ENCODE measurements at regions of chr12 and their contacts with region 1.

Region 1: GRCh38 chr12:62603061-62603810 is 136.6 kb downstream of the MON2 start:
- DNase-seq: peak; percentile 68 to 89 (median 84)
- ATAC-seq: peak; percentile 75
- H3K4me3 ChIP-seq: peak overlapping the region; percentile 93
- H3K4me3 Mint-ChIP-seq: peak overlapping the region; percentile 77 to 97 (median 92)
- H3K27ac ChIP-seq: peak overlapping the region; percentile 99
- H3K27ac Mint-ChIP-seq: peak overlapping the region; percentile 99 to 100 (median 99)
- H3K4me1 ChIP-seq: peaks cover 12% of the 10 kb centered on the region in 2 donors
- H3K4me1 Mint-ChIP-seq: peaks cover 10 to 43% (median 29%) of the 10 kb centered on the region in 7 donors
- H3K27me3 ChIP-seq: no peaks in the 10 kb centered on the region
- H3K27me3 Mint-ChIP-seq: no peaks in the 10 kb centered on the region

Region 2: DNA sequence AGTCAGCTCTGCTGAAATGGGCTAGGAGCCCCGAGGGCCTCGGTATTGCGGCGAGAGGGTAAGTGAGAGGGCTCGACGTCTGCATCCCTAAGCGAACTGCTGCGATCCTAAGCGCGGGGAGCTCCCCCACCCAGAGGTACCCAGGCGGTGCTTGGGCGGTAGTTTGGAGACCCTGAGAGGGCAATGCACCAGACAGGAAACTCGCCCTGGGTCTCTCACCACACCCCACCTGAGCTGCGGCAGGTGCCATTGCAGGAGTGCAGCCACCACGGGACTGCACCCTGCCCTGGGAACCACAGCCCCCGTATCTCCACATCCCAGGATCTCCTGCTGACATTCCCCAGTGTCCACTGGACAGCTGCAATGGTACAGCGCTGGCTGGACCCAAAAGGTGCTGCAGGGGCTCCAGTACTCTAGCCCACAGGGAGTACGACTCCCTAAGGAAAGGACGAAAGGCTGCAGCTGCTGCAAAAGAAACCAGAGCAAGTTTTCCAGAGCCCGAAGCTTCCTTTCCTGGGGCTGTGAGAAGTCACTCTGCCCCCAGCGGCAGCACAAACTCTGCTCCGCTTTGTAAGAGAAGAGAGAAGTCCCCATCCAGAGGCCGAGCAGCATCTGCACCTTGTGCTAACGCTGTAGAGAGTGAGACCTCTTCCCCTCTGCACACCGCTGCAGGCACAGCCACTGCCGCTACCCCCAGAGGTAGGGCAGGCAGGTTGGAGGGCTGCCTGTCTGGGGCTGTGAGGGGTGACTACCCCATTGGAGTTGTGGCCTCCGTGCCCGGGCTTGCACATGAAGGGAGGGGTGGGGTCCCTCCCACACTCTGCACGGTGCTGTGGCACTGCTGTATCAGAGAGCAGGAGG is 167.7 kb before region 1 on chr12:
- CTCF ChIA-PET with region 1: no interaction called
- POLR2A ChIA-PET with region 1: no interaction called
- intact Hi-C with region 1: loop called (anchors 1 to 2 kb)
- DNase-seq: peak; percentile 8 to 38 (median 26)
- ATAC-seq: peak; percentile 77
- H3K4me3 ChIP-seq: peak overlapping the region; percentile 71
- H3K4me3 Mint-ChIP-seq: peak overlapping the region; percentile 79 to 93 (median 89)
- H3K27ac ChIP-seq: no peak overlapping the region
- H3K27ac Mint-ChIP-seq: peak overlapping the region in 3 of 9 donors; percentile 33 to 71 (median 36)
- H3K4me1 ChIP-seq: peaks cover 9 to 10% of the 10 kb centered on the region in 2 donors
- H3K4me1 Mint-ChIP-seq: peaks cover 9 to 24% (median 18%) of the 10 kb centered on the region in 7 donors
- H3K27me3 ChIP-seq: no peaks in the 10 kb centered on the region
- H3K27me3 Mint-ChIP-seq: peaks cover 19 to 67% (median 29%) of the 10 kb centered on the region in 5 donors

Region 3: DNA sequence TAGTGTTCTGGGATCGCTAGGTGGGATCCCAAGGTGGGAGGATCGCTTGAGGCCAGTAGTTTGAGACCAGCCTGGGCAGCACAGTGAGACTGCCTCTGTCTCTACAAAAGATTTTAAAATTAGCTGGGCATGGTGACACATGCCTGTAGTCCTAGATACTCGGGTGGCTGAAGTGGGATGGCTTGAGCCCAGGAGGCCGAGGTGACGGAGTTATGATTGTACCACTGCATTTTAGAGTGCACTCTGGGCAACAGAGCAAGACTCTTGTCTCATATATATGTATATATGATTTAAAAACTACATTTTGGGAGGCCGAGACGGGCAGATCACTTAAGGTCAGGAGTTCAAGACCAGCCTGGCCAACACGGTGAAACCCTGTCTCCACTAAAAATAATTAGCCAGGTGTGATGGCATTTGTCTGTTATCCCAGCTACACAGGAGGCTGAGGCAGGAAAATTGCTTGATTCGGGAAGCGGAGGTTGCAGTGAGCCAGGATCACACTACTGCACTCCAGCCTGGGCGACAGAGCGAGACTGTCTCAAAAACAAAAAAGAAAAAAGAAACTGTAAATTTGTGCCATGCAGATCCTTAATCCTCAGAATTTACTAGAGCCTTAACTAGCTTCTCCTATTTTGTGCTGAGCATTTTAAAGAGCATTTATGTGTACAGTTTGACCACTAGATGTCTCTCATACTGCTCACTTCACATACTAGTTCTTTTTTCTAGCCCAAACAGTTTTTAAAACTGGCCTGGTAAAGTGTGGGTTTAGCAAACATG is 21.8 kb before region 1 on chr12:
- CTCF ChIA-PET with region 1: interaction called, 5 read pairs
- POLR2A ChIA-PET with region 1: interaction called, 6 read pairs
- intact Hi-C with region 1: loop called (anchors 1 kb)
- DNase-seq: peak in 6 of 9 donors; percentile 18 to 53 (median 34)
- ATAC-seq: peak; percentile 81
- H3K4me3 ChIP-seq: no peak overlapping the region
- H3K4me3 Mint-ChIP-seq: no peak overlapping the region
- H3K27ac ChIP-seq: no peak overlapping the region
- H3K27ac Mint-ChIP-seq: peak overlapping the region in 1 of 9 donors; percentile 21
- H3K4me1 ChIP-seq: no peaks in the 10 kb centered on the region
- H3K4me1 Mint-ChIP-seq: peaks cover 0 to 2% (median 0%) of the 10 kb centered on the region in 7 donors
- H3K27me3 ChIP-seq: no peaks in the 10 kb centered on the region
- H3K27me3 Mint-ChIP-seq: no peaks in the 10 kb centered on the region

Region 4: GRCh38 chr12:62640910-62641448 is 37.7 kb after region 1 on chr12:
- CTCF ChIA-PET with region 1: no interaction called
- POLR2A ChIA-PET with region 1: no interaction called
- intact Hi-C with region 1: loop called in 1 of 2 experiments (anchors 2 kb)
- DNase-seq: peak in 2 of 9 donors; percentile 1 to 43
- ATAC-seq: peak; percentile 74
- H3K4me3 ChIP-seq: peak overlapping the region; percentile 22
- H3K4me3 Mint-ChIP-seq: peak overlapping the region in 1 of 10 donors; percentile 52
- H3K27ac ChIP-seq: no peak overlapping the region
- H3K27ac Mint-ChIP-seq: peak overlapping the region in 1 of 9 donors; percentile 58
- H3K4me1 ChIP-seq: peaks cover 0 to 12% of the 10 kb centered on the region in 2 donors
- H3K4me1 Mint-ChIP-seq: peaks cover 0 to 14% (median 6%) of the 10 kb centered on the region in 7 donors
- H3K27me3 ChIP-seq: no peaks in the 10 kb centered on the region
- H3K27me3 Mint-ChIP-seq: peaks cover 4 to 12% (median 10%) of the 10 kb centered on the region in 5 donors

Region 5: GRCh38 chr12:62651138-62651537 is 47.9 kb after region 1 on chr12:
- CTCF ChIA-PET with region 1: no interaction called
- POLR2A ChIA-PET with region 1: no interaction called
- intact Hi-C with region 1: no loop called
- DNase-seq: no peak
- ATAC-seq: no peak
- H3K4me3 ChIP-seq: no peak overlapping the region
- H3K4me3 Mint-ChIP-seq: no peak overlapping the region
- H3K27ac ChIP-seq: no peak overlapping the region
- H3K27ac Mint-ChIP-seq: no peak overlapping the region
- H3K4me1 ChIP-seq: peaks cover 0 to 4% of the 10 kb centered on the region in 2 donors
- H3K4me1 Mint-ChIP-seq: peaks cover 0 to 8% (median 4%) of the 10 kb centered on the region in 7 donors
- H3K27me3 ChIP-seq: no peaks in the 10 kb centered on the region
- H3K27me3 Mint-ChIP-seq: peaks cover 0 to 21% (median 15%) of the 10 kb centered on the region in 5 donors

Region 6: GRCh38 chr12:62793256-62794217 is 190.3 kb after region 1 on chr12:
- CTCF ChIA-PET with region 1: interaction called, 5 read pairs
- POLR2A ChIA-PET with region 1: interaction called, 3 read pairs
- intact Hi-C with region 1: loop called (anchors 1 kb)
- DNase-seq: peak; percentile 32 to 77 (median 62)
- ATAC-seq: peak; percentile 86
- H3K4me3 ChIP-seq: no peak overlapping the region
- H3K4me3 Mint-ChIP-seq: no peak overlapping the region
- H3K27ac ChIP-seq: no peak overlapping the region
- H3K27ac Mint-ChIP-seq: no peak overlapping the region
- H3K4me1 ChIP-seq: no peaks in the 10 kb centered on the region
- H3K4me1 Mint-ChIP-seq: peaks cover 0 to 4% (median 0%) of the 10 kb centered on the region in 7 donors
- H3K27me3 ChIP-seq: no peaks in the 10 kb centered on the region
- H3K27me3 Mint-ChIP-seq: peaks cover 0 to 21% (median 0%) of the 10 kb centered on the region in 5 donors

Region 7: GRCh38 chr12:63779498-63780481 is 1176.6 kb after region 1 on chr12 and contains the start of gene RXYLT1:
- CTCF ChIA-PET with region 1: no interaction called
- POLR2A ChIA-PET with region 1: no interaction called
- intact Hi-C with region 1: loop called in 1 of 2 experiments (anchors 2 kb)
- DNase-seq: peak; percentile 68 to 85 (median 77)
- ATAC-seq: peak; percentile 98
- H3K4me3 ChIP-seq: peak within 1 kb of the TSS; percentile 72
- H3K4me3 Mint-ChIP-seq: peak within 1 kb of the TSS; percentile 91 to 99 (median 96)
- H3K27ac ChIP-seq: peak within 1 kb of the TSS; percentile 88
- H3K27ac Mint-ChIP-seq: peak within 1 kb of the TSS; percentile 89 to 98 (median 94)
- H3K4me1 ChIP-seq: peaks cover 3 to 13% of the 10 kb centered on the region in 2 donors
- H3K4me1 Mint-ChIP-seq: peaks cover 6 to 48% (median 25%) of the 10 kb centered on the region in 7 donors
- H3K27me3 ChIP-seq: no peaks in the 10 kb centered on the region
- H3K27me3 Mint-ChIP-seq: peaks cover 0 to 3% (median 0%) of the 10 kb centered on the region in 5 donors
- total RNA-seq, gene RXYLT1: 9.9 to 22.0 (median 15.4) TPM

Region 8: GRCh38 chr12:64403707-64404469 is 1800.7 kb after region 1 on chr12 and contains the start of gene XPOT:
- CTCF ChIA-PET with region 1: no interaction called
- POLR2A ChIA-PET with region 1: no interaction called
- intact Hi-C with region 1: loop called in 1 of 2 experiments (anchors 10 kb)
- DNase-seq: peak; percentile 85 to 94 (median 92)
- ATAC-seq: peak; percentile 97
- H3K4me3 ChIP-seq: peak within 1 kb of the TSS; percentile 81
- H3K4me3 Mint-ChIP-seq: peak within 1 kb of the TSS; percentile 90 to 99 (median 96)
- H3K27ac ChIP-seq: peak within 1 kb of the TSS; percentile 82
- H3K27ac Mint-ChIP-seq: peak within 1 kb of the TSS; percentile 84 to 98 (median 95)
- H3K4me1 ChIP-seq: peaks cover 0 to 8% of the 10 kb centered on the region in 2 donors
- H3K4me1 Mint-ChIP-seq: peaks cover 8 to 41% (median 25%) of the 10 kb centered on the region in 7 donors
- H3K27me3 ChIP-seq: no peaks in the 10 kb centered on the region
- H3K27me3 Mint-ChIP-seq: no peaks in the 10 kb centered on the region
- total RNA-seq, gene XPOT: 46.6 to 118 (median 75.1) TPM